Naive thymus-derived CD4-positive, alpha-beta T cell (primary cell): ENCODE measurements at regions of chrX and their contacts with region 1.

Region 1: DNA sequence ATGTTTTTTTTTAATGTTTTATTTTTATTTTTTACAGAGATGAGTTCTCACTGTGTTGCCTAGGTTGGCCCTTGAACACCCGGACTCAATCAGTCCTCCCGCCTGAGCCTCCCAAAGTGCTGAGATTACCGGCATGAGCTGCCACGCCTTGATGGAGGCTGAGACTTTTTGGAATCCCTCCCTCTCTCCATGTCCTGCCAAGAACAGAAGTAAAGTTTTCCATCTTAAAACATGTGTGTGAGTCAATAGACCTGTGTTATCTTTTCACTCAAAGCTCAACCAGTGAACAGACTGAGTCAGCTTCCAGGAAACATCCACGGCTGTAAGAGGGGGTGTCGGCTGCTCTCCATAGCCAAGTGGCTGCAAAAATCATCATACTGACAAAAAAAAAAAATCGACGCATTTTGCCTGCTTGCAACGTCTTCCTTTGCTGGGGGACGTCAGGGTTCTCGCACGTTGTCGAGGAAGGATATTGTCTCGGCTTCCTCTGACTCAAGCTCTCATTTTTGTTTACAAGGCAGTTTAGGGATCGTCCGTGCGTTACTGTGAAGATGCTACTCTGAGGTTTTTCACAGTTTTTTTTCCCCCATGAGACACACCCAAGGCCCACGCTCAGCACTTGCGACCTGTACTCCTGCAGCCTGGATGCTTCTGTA is 10.0 kb upstream of the ASMTL start:
- DNase-seq: peak; percentile 9 to 92 (median 88)
- ATAC-seq: peak; percentile 86
- H3K4me3 ChIP-seq: no peak overlapping the region
- H3K4me3 Mint-ChIP-seq: peak overlapping the region in 9 of 10 donors; percentile 15 to 90 (median 43)
- H3K27ac ChIP-seq: peak overlapping the region; percentile 80
- H3K27ac Mint-ChIP-seq: peak overlapping the region; percentile 84 to 98 (median 95)
- H3K4me1 ChIP-seq: peaks cover 44 to 58% of the 10 kb centered on the region in 2 donors
- H3K4me1 Mint-ChIP-seq: peaks cover 44 to 60% (median 55%) of the 10 kb centered on the region in 7 donors
- H3K27me3 ChIP-seq: no peaks in the 10 kb centered on the region
- H3K27me3 Mint-ChIP-seq: no peaks in the 10 kb centered on the region

Region 2: GRCh38 chrX:1481636-1482529 is 19.2 kb after region 1 on chrX:
- CTCF ChIA-PET with region 1: no interaction called
- POLR2A ChIA-PET with region 1: no interaction called
- intact Hi-C with region 1: loop called (anchors 1 kb)
- DNase-seq: peak; percentile 40 to 86 (median 79)
- ATAC-seq: peak; percentile 88
- H3K4me3 ChIP-seq: peak overlapping the region; percentile 29
- H3K4me3 Mint-ChIP-seq: peak overlapping the region; percentile 76 to 92 (median 83)
- H3K27ac ChIP-seq: peak overlapping the region; percentile 76
- H3K27ac Mint-ChIP-seq: peak overlapping the region; percentile 90 to 99 (median 97)
- H3K4me1 ChIP-seq: peaks cover 28 to 56% of the 10 kb centered on the region in 2 donors
- H3K4me1 Mint-ChIP-seq: peaks cover 50 to 74% (median 69%) of the 10 kb centered on the region in 7 donors
- H3K27me3 ChIP-seq: no peaks in the 10 kb centered on the region
- H3K27me3 Mint-ChIP-seq: no peaks in the 10 kb centered on the region

Region 3: DNA sequence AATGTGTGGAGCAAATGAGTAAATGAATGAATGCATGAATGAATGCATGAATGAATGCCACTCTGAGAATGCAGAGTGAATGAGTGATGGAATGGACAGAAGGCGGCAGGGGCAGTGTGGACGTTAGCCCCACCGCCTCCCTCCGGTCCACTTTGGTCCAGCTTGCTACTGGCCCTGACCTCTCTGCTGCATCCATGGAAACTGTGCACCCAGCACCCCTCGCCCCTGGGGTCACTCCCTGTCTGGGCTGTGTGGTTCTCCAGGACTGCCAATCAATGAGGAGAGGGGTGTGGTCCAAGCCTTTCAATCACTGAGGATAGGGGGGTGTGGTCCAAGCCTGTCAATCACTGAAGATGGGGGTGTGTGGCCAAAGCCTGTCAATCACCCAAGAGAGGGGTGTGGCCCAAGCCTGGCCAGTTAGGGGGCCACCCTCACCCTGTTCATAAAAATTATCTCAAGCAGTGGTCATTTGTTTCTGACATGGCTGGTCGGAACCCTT is 29.2 kb after region 1 on chrX:
- CTCF ChIA-PET with region 1: no interaction called
- POLR2A ChIA-PET with region 1: no interaction called
- intact Hi-C with region 1: loop called in 1 of 2 experiments (anchors 1 kb)
- DNase-seq: peak in 8 of 9 donors; percentile 46 to 73 (median 54)
- ATAC-seq: peak; percentile 82
- H3K4me3 ChIP-seq: no peak overlapping the region
- H3K4me3 Mint-ChIP-seq: peak overlapping the region in 1 of 10 donors; percentile 30
- H3K27ac ChIP-seq: no peak overlapping the region
- H3K27ac Mint-ChIP-seq: peak overlapping the region in 8 of 9 donors; percentile 72 to 90 (median 84)
- H3K4me1 ChIP-seq: no peaks in the 10 kb centered on the region
- H3K4me1 Mint-ChIP-seq: peaks cover 20 to 56% (median 34%) of the 10 kb centered on the region in 7 donors
- H3K27me3 ChIP-seq: no peaks in the 10 kb centered on the region
- H3K27me3 Mint-ChIP-seq: peaks cover 0 to 2% (median 0%) of the 10 kb centered on the region in 5 donors

Region 4: GRCh38 chrX:1500701-1501624 is 38.2 kb after region 1 on chrX:
- CTCF ChIA-PET with region 1: no interaction called
- POLR2A ChIA-PET with region 1: no interaction called
- intact Hi-C with region 1: loop called in 1 of 2 experiments (anchors 2 kb)
- DNase-seq: peak in 1 of 9 donors; percentile 42
- ATAC-seq: peak; percentile 23
- H3K4me3 ChIP-seq: peak overlapping the region; percentile 24
- H3K4me3 Mint-ChIP-seq: peak overlapping the region in 6 of 10 donors; percentile 12 to 68 (median 46)
- H3K27ac ChIP-seq: peak overlapping the region; percentile 9
- H3K27ac Mint-ChIP-seq: peak overlapping the region; percentile 58 to 94 (median 81)
- H3K4me1 ChIP-seq: peaks cover 7 to 11% of the 10 kb centered on the region in 2 donors
- H3K4me1 Mint-ChIP-seq: peaks cover 10 to 46% (median 34%) of the 10 kb centered on the region in 7 donors
- H3K27me3 ChIP-seq: no peaks in the 10 kb centered on the region
- H3K27me3 Mint-ChIP-seq: no peaks in the 10 kb centered on the region

Region 5: GRCh38 chrX:1521459-1521956 is 58.8 kb after region 1 on chrX:
- CTCF ChIA-PET with region 1: no interaction called
- POLR2A ChIA-PET with region 1: no interaction called
- intact Hi-C with region 1: loop called in 1 of 2 experiments (anchors 2 kb)
- DNase-seq: peak in 8 of 9 donors; percentile 46 to 81 (median 72)
- ATAC-seq: peak; percentile 90
- H3K4me3 ChIP-seq: peak overlapping the region; percentile 15
- H3K4me3 Mint-ChIP-seq: peak overlapping the region; percentile 77 to 91 (median 84)
- H3K27ac ChIP-seq: peak overlapping the region; percentile 20
- H3K27ac Mint-ChIP-seq: peak overlapping the region; percentile 84 to 97 (median 94)
- H3K4me1 ChIP-seq: peaks cover 32 to 40% of the 10 kb centered on the region in 2 donors
- H3K4me1 Mint-ChIP-seq: peaks cover 46 to 62% (median 56%) of the 10 kb centered on the region in 7 donors
- H3K27me3 ChIP-seq: no peaks in the 10 kb centered on the region
- H3K27me3 Mint-ChIP-seq: no peaks in the 10 kb centered on the region

Region 6: GRCh38 chrX:3029129-3029528 is 1566.4 kb after region 1 on chrX:
- CTCF ChIA-PET with region 1: no interaction called
- POLR2A ChIA-PET with region 1: no interaction called
- intact Hi-C with region 1: no loop called
- DNase-seq: no peak
- ATAC-seq: no peak
- H3K4me3 ChIP-seq: no peak overlapping the region
- H3K4me3 Mint-ChIP-seq: no peak overlapping the region
- H3K27ac ChIP-seq: no peak overlapping the region
- H3K27ac Mint-ChIP-seq: no peak overlapping the region
- H3K4me1 ChIP-seq: no peaks in the 10 kb centered on the region
- H3K4me1 Mint-ChIP-seq: no peaks in the 10 kb centered on the region
- H3K27me3 ChIP-seq: no peaks in the 10 kb centered on the region
- H3K27me3 Mint-ChIP-seq: peaks cover 0 to 15% (median 0%) of the 10 kb centered on the region in 5 donors